Activated CD8-positive, alpha-beta T cell treated with anti-CD3 and anti-CD28 coated beads for 36 hours (primary cell): ENCODE measurements at regions of chr5 and their contacts with region 1.

Region 1: GRCh38 chr5:98913911-98914310 is 14.9 kb downstream of the CHD1 start:
- DNase-seq: no peak
- ATAC-seq: peak; percentile 57
- H3K4me3 Mint-ChIP-seq: no peak overlapping the region
- H3K27ac Mint-ChIP-seq: peak overlapping the region; percentile 50
- H3K4me1 Mint-ChIP-seq: peaks cover 75% of the 10 kb centered on the region
- H3K27me3 Mint-ChIP-seq: no peaks in the 10 kb centered on the region
- CTCF ChIP-seq: no peak

Region 2: DNA sequence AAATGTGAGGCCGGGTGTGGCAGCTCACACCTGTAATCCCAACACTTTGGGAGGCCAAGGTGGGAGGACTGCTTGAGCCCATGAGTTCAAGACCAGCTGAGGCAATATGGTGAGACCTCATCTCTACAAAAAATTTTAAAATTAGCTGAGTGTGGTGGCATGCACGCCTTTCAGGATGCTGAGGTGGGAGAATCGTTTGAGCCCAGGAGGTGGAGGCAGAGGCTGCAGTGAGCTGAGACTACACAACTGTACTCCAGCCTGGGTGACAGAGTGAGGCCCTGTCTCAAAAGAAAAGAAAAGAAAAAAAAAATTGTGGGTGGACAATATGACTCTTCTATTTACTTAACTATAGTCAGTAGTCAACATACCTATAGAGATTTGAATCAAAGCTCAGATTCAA is 10.1 kb after region 1 on chr5:
- CTCF ChIA-PET with region 1: interaction called, 9 read pairs
- POLR2A ChIA-PET with region 1: interaction called, 10 read pairs
- intact Hi-C with region 1: no loop called
- DNase-seq: peak; percentile 29
- ATAC-seq: no peak
- H3K4me3 Mint-ChIP-seq: no peak overlapping the region
- H3K27ac Mint-ChIP-seq: peak overlapping the region; percentile 42
- H3K4me1 Mint-ChIP-seq: peaks cover 51% of the 10 kb centered on the region
- H3K27me3 Mint-ChIP-seq: no peaks in the 10 kb centered on the region
- CTCF ChIP-seq: no peak